Dorsolateral prefrontal cortex (tissue), 120 donors: ENCODE measurements at regions of chr1 and their contacts with region 1.

Region 1: GRCh38 chr1:160006312-160006940 is 25.4 kb downstream of the PIGM start:
- DNase-seq: peak in 4 of 10 donors; percentile 14 to 38 (median 34)
- H3K4me3 ChIP-seq: no peak overlapping the region
- H3K27ac ChIP-seq: no peak overlapping the region
- H3K27me3 ChIP-seq: peaks cover 0 to 4% (median 0%) of the 10 kb centered on the region in 45 donors
- CTCF ChIP-seq: peak in 55 of 56 donors; percentile 14 to 72 (median 58)

Region 2: DNA sequence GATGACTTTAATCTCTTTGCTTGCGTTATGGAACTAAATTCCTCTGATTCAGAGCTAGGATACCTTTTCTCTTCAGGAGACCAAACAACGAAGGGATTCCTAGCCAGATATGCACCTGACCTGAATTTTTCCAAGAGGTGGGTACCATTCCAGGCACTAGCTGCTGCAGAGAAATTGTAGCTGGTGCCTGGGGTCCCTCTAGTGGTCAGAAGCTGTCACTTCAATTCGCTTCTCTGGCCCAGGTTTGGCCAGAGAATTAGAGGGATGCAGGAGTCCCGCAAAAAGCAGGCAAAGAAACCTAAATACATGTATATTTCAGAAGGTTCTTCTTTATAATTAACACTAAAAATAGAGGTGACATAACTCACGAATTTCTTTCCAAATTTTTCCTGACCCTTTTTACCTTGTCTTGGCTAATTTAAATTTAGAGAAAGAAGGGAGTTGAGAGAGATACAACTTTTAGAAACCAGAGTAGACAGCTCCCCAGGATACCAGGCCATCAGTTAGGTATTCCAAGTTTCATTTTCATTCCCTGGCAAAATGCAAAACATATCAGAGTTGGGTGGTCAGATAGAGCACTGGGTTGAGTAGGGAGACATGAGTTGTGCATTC is 792.2 kb before region 1 on chr1:
- intact Hi-C with region 1: loop called in 1 of 2 experiments (anchors 10 kb)
- DNase-seq: peak in 6 of 10 donors; percentile 42 to 77 (median 56)
- H3K4me3 ChIP-seq: no peak overlapping the region
- H3K27ac ChIP-seq: no peak overlapping the region
- H3K27me3 ChIP-seq: peaks cover 0 to 31% (median 0%) of the 10 kb centered on the region in 45 donors
- CTCF ChIP-seq: peak; percentile 72 to 97 (median 91)

Region 3: DNA sequence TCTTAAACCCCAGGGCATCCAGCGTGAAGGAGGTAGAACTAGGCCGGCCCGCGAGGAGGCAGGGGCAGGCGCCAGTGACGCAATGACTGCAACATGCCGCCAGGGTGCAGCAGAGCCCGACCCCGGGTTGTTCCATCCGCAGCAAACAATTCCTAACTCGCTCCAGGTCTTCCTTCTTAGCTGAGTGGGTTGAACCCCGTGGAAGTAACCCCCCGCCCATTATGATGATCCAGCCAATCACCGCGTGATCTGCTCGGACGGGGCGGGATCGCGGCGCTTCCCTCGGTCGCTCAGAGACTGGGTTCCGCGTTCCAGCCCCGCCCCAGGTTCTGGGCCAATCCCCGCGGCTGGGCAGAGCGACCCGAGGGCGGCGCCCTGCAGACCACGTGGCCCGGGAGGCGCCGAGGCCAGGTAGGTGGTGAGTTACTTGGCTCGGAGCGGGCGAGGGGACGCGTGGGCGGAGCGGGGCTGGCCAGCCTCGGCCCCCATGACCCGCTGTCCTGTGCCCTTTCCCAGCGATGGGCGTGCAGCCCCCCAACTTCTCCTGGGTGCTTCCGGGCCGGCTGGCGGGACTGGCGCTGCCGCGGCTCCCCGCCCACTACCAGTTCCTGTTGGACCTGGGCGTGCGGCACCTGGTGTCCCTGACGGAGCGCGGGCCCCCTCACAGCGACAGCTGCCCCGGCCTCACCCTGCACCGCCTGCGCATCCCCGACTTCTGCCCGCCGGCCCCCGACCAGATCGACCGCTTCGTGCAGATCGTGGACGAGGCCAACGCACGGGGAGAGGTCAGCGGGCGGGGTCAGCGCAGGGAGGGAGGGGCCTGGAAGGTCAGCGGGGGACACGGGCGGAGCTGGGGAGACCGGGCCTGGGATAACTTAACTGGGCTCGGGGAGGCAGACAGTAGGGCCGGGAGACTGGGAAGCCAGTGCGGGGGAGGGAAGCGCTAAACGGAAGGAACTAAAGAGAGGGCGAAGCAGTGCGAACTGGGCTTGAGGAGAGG is 225.5 kb before region 1 on chr1 and contains the start of gene DUSP23:
- intact Hi-C with region 1: loop called in 1 of 2 experiments (anchors 5 kb)
- DNase-seq: peak; percentile 91 to 98 (median 96)
- H3K4me3 ChIP-seq: peak within 1 kb of the TSS; percentile 51 to 97 (median 86)
- H3K27ac ChIP-seq: peak within 1 kb of the TSS in 53 of 59 donors; percentile 11 to 87 (median 74)
- H3K27me3 ChIP-seq: no peaks in the 10 kb centered on the region
- CTCF ChIP-seq: peak; percentile 68 to 99 (median 96)
- total RNA-seq, gene DUSP23: 8.3 to 30.2 (median 16.0) TPM

Region 4: GRCh38 chr1:159798893-159799292 is 207.5 kb before region 1 on chr1:
- intact Hi-C with region 1: loop called in 1 of 2 experiments (anchors 5 kb)
- DNase-seq: peak in 4 of 10 donors; percentile 18 to 55 (median 33)
- H3K4me3 ChIP-seq: no peak overlapping the region
- H3K27ac ChIP-seq: no peak overlapping the region
- H3K27me3 ChIP-seq: peaks cover 0 to 3% (median 0%) of the 10 kb centered on the region in 45 donors
- CTCF ChIP-seq: peak in 54 of 56 donors; percentile 50 to 88 (median 70)

Region 5: DNA sequence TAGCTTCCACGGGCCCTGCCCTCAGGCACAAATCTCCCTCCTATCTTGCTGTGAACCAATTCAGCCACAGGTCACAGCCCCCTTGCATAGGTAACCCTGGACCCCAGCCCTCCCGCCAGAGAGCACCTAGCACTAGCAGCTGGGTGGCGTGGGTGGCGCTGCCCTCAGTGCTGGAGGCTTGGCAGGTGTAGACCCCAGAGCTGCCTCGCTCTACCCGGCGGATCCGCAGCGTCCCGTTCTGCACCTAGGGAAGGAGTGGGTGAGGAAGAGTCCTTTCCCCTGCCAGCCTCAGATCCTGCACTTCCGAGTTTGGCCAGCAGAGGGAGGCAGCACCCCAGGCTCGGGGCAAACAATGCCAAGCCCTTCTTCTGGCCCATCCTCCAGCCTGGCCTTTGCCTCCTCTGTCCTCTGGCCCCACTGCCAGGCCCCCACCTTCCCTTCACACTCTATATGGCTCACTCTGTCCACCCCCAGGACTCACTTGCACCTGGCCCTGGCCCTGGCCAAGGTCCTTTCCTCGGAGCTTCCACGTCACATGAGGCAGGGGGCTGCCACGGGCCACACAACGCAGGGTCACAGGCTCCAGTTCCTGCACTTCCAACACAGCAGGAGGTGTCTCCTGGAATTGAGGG is 70.0 kb before region 1 on chr1:
- intact Hi-C with region 1: loop called (anchors 2 kb)
- DNase-seq: peak in 5 of 10 donors; percentile 45 to 78 (median 55)
- H3K4me3 ChIP-seq: no peak overlapping the region
- H3K27ac ChIP-seq: no peak overlapping the region
- H3K27me3 ChIP-seq: peaks cover 0 to 18% (median 0%) of the 10 kb centered on the region in 45 donors
- CTCF ChIP-seq: peak; percentile 78 to 100 (median 97)